ENCODE measurements at regions of chr11 and their contacts with region 1.

Region 1: GRCh38 chr11:63687845-63688244 is 6.5 kb downstream of the RTN3 start:
- DNase-seq: no peak
- ATAC-seq: no peak
- H3K4me3 ChIP-seq: no peak overlapping the region
- H3K27ac ChIP-seq: no peak overlapping the region
- H3K4me1 ChIP-seq: peaks cover 6% of the 10 kb centered on the region
- H3K27me3 ChIP-seq: no peaks in the 10 kb centered on the region
- CTCF ChIP-seq: no peak
- POLR2A ChIP-seq: no peak
- RAD21 ChIP-seq: no peak

Region 2: GRCh38 chr11:63705526-63705925 is 17.7 kb after region 1 on chr11:
- CTCF ChIA-PET with region 1: no interaction called
- POLR2A ChIA-PET with region 1: no interaction called
- dilution Hi-C with region 1: no loop called
- in situ Hi-C with region 1: no loop called
- intact Hi-C with region 1: loop called (anchors 2 kb)
- DNase-seq: no peak
- ATAC-seq: no peak
- H3K4me3 ChIP-seq: no peak overlapping the region
- H3K27ac ChIP-seq: peak overlapping the region; percentile 18; the same call in 1 of the 2 replicates
- H3K4me1 ChIP-seq: peaks cover 4% of the 10 kb centered on the region
- H3K27me3 ChIP-seq: no peaks in the 10 kb centered on the region
- CTCF ChIP-seq: no peak
- POLR2A ChIP-seq: no peak
- RAD21 ChIP-seq: no peak

Measured in IMR-90 (cell line).